Activated CD8-positive, alpha-beta memory T cell treated with anti-CD3 and anti-CD28 coated beads, Interleukin-2, amount 10 ng/mL, durations not matched to agents 7 days and 5 days (primary cell): ENCODE measurements at regions of chr1 and their contacts with region 1.

Region 1: DNA sequence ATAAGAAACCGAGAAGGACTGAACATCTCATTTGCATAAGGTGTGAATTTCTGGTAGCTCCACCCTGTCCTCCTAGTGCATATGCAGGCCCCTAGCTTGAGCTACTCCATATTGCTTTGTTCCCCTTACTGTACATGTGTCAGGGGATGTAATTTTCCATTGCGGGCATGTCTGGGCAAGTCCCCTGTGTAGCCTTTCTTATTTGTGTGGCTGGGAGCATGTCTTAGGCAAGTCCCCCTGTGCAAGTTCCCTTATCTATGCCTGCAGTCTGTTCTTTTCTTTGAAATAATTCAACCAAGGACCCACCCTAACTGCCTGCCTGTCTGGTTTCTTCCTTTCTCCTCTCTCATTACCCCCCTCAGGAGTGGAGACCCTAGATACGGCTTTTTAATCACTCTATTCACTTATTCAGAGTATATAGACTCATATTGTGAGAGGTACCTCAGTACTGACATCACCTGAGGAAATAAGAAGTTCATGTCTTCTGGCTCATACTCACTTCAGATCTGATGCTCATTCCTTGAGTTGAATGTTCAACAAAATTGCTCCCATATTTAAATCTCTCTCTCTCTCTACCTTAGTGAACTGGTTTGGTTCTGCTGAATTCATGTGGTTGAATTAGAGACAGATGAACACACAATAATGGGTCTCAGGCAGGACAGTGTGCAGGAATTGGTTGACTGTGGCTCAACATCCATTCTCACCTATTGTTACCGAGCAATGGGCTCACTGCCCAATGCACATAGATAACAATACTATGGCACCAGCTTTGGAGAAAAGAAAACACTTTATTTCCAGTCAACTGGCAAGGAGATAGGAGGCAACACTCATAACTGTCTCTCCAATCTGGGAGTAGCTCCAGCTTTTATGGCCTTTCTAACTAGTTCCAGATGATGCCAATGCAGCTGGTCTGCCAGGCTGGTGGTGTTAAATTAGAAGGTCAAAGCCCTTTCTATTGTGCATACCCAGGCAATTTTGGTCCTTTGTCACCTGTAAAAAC is 27.9 kb upstream of the NPL start:
- DNase-seq: no peak
- ATAC-seq: no peak
- H3K4me3 Mint-ChIP-seq: no peak overlapping the region
- H3K27ac Mint-ChIP-seq: no peak overlapping the region
- H3K4me1 Mint-ChIP-seq: peaks cover 2% of the 10 kb centered on the region
- H3K27me3 Mint-ChIP-seq: peaks cover 21% of the 10 kb centered on the region

Region 2: GRCh38 chr1:182781841-182782586 is 20.3 kb after region 1 on chr1:
- CTCF ChIA-PET with region 1: interaction called, 16 read pairs
- DNase-seq: peak; percentile 78
- ATAC-seq: peak; percentile 83
- H3K4me3 Mint-ChIP-seq: no peak overlapping the region
- H3K27ac Mint-ChIP-seq: no peak overlapping the region
- H3K4me1 Mint-ChIP-seq: peaks cover 13% of the 10 kb centered on the region
- H3K27me3 Mint-ChIP-seq: peaks cover 21% of the 10 kb centered on the region

Region 3: GRCh38 chr1:182829285-182829932 is 67.7 kb after region 1 on chr1:
- CTCF ChIA-PET with region 1: no interaction called
- DNase-seq: no peak
- ATAC-seq: no peak
- H3K4me3 Mint-ChIP-seq: no peak overlapping the region
- H3K27ac Mint-ChIP-seq: no peak overlapping the region
- H3K4me1 Mint-ChIP-seq: peaks cover 3% of the 10 kb centered on the region
- H3K27me3 Mint-ChIP-seq: peaks cover 4% of the 10 kb centered on the region

Region 4: GRCh38 chr1:182877842-182878241 is 116.1 kb after region 1 on chr1:
- CTCF ChIA-PET with region 1: no interaction called
- DNase-seq: no peak
- ATAC-seq: no peak
- H3K4me3 Mint-ChIP-seq: no peak overlapping the region
- H3K27ac Mint-ChIP-seq: no peak overlapping the region
- H3K4me1 Mint-ChIP-seq: peaks cover 9% of the 10 kb centered on the region
- H3K27me3 Mint-ChIP-seq: no peaks in the 10 kb centered on the region